ENCODE measurements at regions of chr18 and their contacts with region 1.

Region 1: DNA sequence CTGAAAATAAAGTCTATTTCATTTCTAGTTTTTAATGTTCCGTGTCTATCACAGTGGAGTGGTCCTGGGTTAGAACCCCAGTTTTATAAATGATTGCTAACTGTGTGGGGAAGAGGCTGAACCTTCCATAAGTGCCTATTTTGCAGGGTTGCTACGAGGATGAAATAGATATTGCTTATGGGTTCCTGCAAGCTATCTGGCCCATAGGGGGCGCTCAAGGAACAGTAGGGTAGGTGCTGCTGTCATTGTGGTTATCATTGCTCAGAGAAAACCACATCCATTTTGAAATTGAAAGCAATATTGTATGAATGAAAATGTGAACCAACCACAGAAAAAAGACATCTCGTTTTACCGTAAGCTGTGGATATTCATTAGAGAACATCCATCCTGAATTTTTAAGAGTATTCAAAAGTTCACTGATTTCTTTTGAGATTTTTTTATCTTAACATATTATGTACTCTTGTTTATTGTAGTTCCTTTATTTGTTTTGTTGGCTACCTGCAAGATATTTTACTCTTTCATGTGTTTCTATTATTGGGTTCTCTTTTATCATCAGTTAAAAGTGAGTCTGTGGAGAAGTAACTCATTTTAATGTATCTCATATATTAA is 261.6 kb downstream of the NAPG start:
- DNase-seq: peak; percentile 78
- H3K4me3 Mint-ChIP-seq: no peak overlapping the region
- H3K27ac Mint-ChIP-seq: no peak overlapping the region
- H3K4me1 Mint-ChIP-seq: peaks cover 3% of the 10 kb centered on the region
- H3K27me3 Mint-ChIP-seq: peaks cover 56% of the 10 kb centered on the region

Region 2: GRCh38 chr18:10560450-10561045 is 226.8 kb before region 1 on chr18:
- intact Hi-C with region 1: loop called (anchors 10 kb)
- DNase-seq: peak; percentile 31
- H3K4me3 Mint-ChIP-seq: no peak overlapping the region
- H3K27ac Mint-ChIP-seq: no peak overlapping the region
- H3K4me1 Mint-ChIP-seq: peaks cover 7% of the 10 kb centered on the region
- H3K27me3 Mint-ChIP-seq: no peaks in the 10 kb centered on the region

Region 3: GRCh38 chr18:10771053-10771709 is 16.2 kb before region 1 on chr18:
- intact Hi-C with region 1: loop called (anchors 2 kb)
- DNase-seq: no peak
- H3K4me3 Mint-ChIP-seq: no peak overlapping the region
- H3K27ac Mint-ChIP-seq: no peak overlapping the region
- H3K4me1 Mint-ChIP-seq: peaks cover 3% of the 10 kb centered on the region
- H3K27me3 Mint-ChIP-seq: peaks cover 39% of the 10 kb centered on the region